PC-9 (cell line): ENCODE measurements at regions of chr11 and their contacts with region 1.

Region 1: GRCh38 chr11:20355221-20356219 is 8.0 kb upstream of the HTATIP2 start:
- DNase-seq: peak in 1 of 2 experiments; percentile 46
- H3K4me3 ChIP-seq: no peak overlapping the region
- H3K27ac ChIP-seq: no peak overlapping the region
- H3K4me1 ChIP-seq: no peaks in the 10 kb centered on the region; the same call in 1 of the 2 replicates
- H3K27me3 ChIP-seq: no peaks in the 10 kb centered on the region
- CTCF ChIP-seq: peak; percentile 74

Region 2: DNA sequence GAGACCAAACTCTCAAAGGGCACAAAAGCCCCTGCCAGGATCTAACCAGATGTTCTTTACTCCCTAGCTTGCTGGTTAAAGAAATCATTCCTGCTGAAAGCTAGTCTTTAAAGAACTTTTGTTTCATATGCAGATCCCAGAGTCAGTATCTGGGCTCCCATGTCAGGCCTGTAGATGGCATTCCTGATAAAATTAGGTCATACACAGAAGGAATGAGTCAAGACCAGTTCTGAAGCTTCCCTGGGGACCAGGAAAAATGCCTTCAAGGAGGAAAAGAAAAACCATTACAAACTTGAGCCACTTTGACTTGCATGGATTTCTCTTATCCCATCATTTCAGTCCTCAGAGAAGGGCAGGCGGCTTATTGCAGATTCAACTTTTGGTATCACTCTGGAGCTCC is 201.1 kb before region 1 on chr11:
- CTCF ChIA-PET with region 1: interaction called, 12 read pairs
- POLR2A ChIA-PET with region 1: no interaction called
- intact Hi-C with region 1: no loop called
- DNase-seq: no peak
- H3K4me3 ChIP-seq: no peak overlapping the region
- H3K27ac ChIP-seq: no peak overlapping the region
- H3K4me1 ChIP-seq: no peaks in the 10 kb centered on the region
- H3K27me3 ChIP-seq: peaks cover 27% of the 10 kb centered on the region
- CTCF ChIP-seq: no peak